BJ (cell line): ENCODE measurements at regions of chr1 and their contacts with region 1.

Region 1: DNA sequence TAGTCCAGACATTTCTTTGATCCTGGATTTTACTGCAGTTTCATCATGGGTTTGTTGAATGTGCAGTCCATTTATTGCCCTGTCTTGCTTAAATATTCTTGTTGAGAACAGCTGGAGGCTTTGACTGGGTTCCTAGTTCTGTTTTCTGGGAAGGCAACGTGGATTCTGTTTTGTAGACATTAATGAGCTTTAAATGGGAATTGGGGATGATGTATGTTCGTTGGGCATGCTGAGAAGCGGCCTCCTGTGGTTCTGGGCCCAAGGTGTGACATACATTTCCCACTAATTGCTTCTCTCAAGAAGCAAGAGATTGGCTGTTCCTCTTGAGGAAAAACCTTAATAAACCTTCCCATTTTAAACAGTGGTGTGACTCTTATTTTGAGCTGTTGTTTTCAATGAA is 22.9 kb downstream of the INKA2 start:
- DNase-seq: no peak
- H3K4me3 ChIP-seq: no peak overlapping the region
- H3K27me3 ChIP-seq: no peaks in the 10 kb centered on the region
- CTCF ChIP-seq: no peak

Region 2: DNA sequence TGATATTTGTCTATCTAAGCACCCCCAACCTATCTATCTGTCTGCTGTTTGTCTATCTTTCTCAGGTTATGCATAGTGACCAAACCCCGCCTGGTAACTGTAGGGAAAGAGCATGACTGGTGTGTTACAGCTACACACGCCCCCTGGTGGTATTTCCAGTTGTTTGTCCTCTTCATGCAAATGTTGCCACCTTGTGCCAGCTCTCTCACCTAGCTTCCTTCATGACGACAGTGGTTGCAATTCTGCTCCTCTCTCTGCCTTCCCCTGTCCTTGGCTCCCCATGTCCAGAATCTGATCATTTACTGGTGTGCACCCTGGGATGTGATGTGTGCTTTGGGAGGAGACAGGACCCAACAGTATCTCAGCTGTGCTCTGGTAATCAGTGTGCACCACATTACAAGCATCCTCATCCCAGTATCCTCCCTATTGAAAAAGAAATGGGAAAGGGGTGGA is 31.0 kb after region 1 on chr1:
- CTCF ChIA-PET with region 1: interaction called, 38 read pairs
- POLR2A ChIA-PET with region 1: no interaction called
- DNase-seq: no peak
- H3K4me3 ChIP-seq: no peak overlapping the region
- H3K27me3 ChIP-seq: no peaks in the 10 kb centered on the region
- CTCF ChIP-seq: peak; percentile 61

Region 3: GRCh38 chr1:111755331-111756123 is 39.2 kb after region 1 on chr1 and contains the start of gene DDX20:
- CTCF ChIA-PET with region 1: interaction called, 18 read pairs
- POLR2A ChIA-PET with region 1: no interaction called
- DNase-seq: peak; percentile 86
- H3K4me3 ChIP-seq: peak within 1 kb of the TSS; percentile 90
- H3K27me3 ChIP-seq: no peaks in the 10 kb centered on the region
- CTCF ChIP-seq: peak; percentile 72
- polyA plus RNA-seq, gene DDX20: 6.9 and 12.9 TPM in 2 replicates

Region 4: GRCh38 chr1:111793923-111794322 is 77.6 kb after region 1 on chr1:
- CTCF ChIA-PET with region 1: no interaction called
- POLR2A ChIA-PET with region 1: no interaction called
- DNase-seq: no peak
- H3K4me3 ChIP-seq: no peak overlapping the region
- H3K27me3 ChIP-seq: peaks cover 4% of the 10 kb centered on the region
- CTCF ChIP-seq: no peak